ENCODE measurements at regions of chr11 and their contacts with region 1.

Region 1: DNA sequence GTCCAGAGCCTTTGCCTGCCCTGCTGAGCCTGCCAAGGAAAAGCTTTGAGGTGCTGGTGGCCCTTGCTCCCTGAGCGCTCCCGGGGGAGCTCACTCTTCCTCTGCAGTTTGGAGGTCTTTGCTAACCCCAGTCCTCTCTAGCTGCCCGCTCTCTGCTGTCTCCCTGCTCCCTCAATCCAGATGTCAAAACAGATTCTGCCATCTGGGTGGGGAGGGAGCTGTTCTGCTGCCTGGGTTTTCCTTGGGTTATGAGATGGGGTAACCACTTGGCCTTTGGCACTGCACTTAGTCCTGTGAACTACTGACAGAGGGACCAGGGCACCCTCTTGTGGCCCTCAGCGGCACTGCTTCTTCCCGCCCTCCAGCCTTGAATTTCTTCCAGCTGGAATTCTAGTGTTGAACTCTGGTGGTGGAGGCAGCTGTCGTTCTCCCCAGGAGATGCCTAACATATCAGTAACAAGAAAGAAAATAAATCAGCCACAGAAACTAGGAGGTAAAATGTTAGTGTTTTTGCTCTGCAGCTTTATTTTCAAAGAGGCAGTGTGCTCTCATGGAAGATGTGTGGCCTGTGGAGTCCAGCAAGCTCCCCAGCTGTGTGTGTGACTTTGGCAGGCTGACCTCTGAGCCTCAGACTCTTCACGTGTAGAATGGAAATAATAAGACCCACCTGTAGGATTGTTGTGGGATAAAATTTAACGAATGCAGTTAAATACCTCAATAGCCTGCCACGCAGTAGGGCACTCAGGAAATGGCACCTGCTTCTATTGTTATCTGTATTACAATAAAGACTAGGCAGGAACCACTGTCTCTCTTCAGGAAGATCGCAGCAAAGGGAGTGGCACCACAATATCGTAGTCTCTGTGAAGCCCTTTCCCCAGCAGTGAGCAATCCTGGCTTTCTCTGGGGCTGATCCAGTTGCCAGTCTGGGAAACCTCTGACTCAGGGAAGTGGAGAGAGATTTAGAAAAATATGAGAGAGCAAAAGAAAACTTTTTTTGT is 23.4 kb downstream of the ARFGAP2 start:
- DNase-seq: no peak
- H3K4me3 ChIP-seq: no peak overlapping the region
- CTCF ChIP-seq: peak; percentile 94

Region 2: DNA sequence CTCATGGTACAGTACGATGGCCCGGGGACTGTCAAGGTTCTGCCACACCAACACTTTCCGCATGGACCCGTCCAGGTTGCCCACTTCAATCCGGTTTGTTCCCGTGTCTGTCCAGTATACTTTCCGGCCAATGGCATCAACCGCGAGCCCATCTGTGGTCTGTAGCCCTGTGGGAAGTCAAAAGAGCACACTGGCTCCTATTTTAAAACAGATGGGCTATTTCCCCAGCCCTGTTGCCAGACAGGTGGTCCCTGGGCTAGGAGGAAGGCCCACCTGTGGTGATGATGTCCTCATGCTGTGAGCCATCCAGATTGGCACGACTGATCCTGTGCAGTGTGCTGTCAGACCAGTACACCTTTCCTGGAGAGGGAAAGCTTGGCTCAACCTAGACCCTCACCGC is 276.8 kb before region 1 on chr11:
- CTCF ChIA-PET with region 1: interaction called, 181 read pairs
- POLR2A ChIA-PET with region 1: no interaction called
- DNase-seq: no peak
- H3K4me3 ChIP-seq: no peak overlapping the region
- CTCF ChIP-seq: no peak

Region 3: DNA sequence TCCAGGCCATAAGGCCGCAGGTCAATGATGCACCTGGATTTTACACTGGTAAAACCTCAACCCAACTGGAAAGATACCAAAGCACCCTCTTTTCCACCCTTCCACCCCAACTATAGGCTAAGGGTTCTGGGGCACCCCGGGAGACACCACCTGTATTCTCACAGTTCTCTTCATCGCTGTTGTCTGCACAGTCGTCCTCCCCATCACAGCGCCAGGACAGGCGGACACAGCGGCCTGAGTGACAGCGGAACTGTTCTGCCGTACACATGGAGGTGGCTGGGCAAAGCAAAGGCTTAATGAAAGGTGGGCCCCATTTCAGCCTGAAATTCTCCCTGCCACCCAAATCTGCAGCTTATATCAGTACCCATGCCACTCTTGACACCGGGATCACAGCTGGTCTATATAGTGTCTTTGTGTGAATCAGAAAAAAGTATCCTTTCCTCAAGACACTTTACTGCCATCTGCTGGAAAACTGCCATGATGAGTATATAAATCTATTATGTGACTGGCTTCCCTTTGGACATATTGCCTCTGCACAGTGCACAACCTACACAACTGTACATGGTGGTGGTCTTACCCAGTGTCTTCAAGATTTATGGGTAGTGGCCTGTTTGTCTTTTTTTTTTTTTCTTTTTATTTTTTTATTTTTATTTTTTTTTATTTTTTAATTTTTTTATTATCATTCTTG is 256.4 kb before region 1 on chr11:
- CTCF ChIA-PET with region 1: interaction called, 152 read pairs
- POLR2A ChIA-PET with region 1: no interaction called
- DNase-seq: no peak
- H3K4me3 ChIP-seq: no peak overlapping the region
- CTCF ChIP-seq: no peak

Region 4: DNA sequence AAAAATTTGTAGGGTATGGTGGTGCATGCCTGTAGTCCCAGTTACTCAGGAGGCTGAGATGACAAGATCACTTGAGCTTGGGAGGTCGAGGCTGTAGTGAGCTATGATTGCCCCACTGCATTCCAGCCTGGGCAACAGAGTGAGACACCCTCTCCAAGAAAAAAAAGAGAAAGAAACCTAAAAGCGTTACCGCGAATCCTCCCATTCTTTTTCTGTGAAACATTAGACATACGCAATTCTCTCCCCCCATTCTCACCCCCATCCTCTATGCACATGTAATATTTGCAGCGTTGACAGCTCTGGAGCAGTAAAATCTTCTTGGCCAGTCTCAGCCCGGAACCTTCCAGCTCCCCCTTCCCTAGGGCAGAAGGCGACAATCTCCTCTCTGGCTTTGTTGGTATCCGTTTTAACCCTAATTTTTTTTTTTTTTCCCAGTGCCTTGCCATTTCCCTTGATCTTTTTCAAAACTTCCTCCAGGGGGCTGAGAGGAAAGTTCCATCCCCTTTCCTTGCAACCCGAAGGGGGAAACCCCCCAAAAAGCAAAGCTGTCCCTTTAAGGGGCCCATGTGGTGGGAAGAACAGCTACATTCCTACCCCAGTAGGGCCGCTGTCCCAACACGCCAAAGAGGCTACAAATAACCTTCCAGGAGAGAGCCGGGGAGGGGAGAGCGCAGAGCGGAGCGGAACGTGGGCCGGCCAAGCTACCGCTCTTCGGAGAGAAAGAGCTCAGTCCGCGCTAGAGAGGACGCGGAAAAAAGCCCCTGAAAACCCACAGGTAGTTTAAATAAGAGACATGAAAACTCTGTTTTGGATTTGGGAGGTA is 236.8 kb before region 1 on chr11:
- CTCF ChIA-PET with region 1: interaction called, 115 read pairs
- POLR2A ChIA-PET with region 1: no interaction called
- DNase-seq: no peak
- H3K4me3 ChIP-seq: peak overlapping the region; percentile 64
- CTCF ChIP-seq: peak; percentile 5

Region 5: DNA sequence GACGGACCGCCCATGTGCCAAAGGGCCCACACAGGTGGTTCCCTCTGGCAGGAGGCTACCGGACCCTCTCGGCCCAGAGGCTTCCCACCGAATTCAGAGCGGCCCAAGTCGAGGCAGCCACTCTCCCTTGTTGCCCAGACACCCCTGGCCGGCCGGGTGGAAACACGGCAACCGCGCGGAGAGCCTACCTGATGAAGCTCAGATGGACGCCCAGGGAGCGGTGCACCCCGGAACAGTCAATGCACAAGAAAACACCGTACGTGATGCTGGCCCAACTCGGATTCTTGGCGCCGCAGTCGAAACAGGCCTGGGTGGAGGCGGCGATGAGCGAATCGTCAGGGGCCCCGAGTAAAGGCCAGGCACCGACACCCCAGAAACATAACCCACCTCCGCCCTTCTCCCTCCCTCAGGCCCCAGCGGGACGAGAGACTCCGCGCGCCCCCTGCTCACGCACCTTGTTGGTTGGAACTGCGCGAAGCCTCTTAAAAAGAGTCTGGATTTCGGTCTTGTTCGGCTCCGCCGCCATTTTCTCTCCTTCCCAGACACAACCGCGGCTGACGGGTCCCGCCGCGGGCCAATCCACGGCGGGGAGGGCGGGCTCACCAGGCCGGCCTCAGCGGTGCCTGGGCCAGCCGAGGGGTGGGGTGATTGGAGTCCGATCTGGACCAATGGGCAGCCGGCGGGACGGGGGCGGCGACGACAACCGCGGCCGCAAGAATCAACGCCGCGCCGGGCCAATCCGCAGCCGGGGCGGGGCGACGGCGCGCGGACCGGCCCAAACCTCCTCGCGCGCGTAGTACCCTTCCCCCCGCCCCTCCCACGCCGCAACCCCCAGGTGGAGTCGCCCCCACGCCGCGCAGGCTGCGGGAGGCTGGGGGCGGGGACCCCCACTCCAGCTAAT is 23.3 kb after region 1 on chr11 and contains the start of gene ARFGAP2:
- CTCF ChIA-PET with region 1: interaction called, 10 read pairs
- POLR2A ChIA-PET with region 1: no interaction called
- DNase-seq: peak; percentile 62
- H3K4me3 ChIP-seq: peak within 1 kb of the TSS; percentile 98
- CTCF ChIP-seq: no peak

Measured in AG04449 (cell line).